Activated CD4-positive, alpha-beta memory T cell treated with anti-CD3 and anti-CD28 coated beads for 36 hours (primary cell): ENCODE measurements at regions of chr1 and their contacts with region 1.

Region 1: DNA sequence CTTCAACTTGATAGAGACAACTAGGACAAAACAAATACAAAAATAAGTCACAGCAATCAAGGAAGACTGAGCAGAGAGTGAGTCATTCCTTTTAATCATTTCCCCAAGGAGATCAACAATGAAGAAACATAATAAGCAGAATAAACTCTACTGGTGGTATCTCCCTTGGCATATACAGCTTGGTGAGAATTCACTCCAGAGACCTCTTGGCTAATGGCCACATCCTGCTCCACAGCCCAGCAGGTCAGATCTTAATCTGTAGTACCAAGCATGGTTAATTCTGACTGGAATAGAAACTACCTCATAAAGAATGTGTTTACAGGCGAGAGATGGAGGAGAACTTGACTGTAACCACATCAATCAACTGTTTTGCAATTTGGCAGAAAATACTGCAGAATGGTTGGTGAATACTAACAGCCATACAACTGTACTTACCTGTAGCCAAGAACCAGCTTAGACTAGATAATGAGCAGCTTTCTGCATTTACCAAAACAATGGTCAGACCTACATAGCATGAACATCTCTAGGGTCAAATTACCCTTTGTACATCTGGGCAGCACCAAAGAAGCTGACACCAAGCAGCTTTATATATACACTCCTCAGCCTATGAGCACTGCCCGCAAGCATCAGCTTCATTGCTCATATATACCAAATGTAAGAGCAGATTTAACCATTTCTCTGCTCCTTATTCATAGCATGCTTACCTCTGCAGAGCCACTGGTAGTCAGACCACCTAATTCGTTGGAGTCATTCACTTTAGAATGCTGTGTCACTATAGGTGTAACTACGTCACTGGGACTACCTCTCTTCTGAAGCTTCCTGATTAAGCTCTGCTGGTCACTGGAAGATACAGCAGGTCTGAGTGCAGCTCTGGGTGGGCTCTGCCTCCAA is 51.0 kb downstream of the KIAA0319L start:
- DNase-seq: peak; percentile 77
- H3K4me3 Mint-ChIP-seq: peak overlapping the region; percentile 28
- H3K27ac Mint-ChIP-seq: peak overlapping the region; percentile 81
- H3K4me1 Mint-ChIP-seq: peaks cover 62% of the 10 kb centered on the region
- H3K27me3 Mint-ChIP-seq: no peaks in the 10 kb centered on the region

Region 2: DNA sequence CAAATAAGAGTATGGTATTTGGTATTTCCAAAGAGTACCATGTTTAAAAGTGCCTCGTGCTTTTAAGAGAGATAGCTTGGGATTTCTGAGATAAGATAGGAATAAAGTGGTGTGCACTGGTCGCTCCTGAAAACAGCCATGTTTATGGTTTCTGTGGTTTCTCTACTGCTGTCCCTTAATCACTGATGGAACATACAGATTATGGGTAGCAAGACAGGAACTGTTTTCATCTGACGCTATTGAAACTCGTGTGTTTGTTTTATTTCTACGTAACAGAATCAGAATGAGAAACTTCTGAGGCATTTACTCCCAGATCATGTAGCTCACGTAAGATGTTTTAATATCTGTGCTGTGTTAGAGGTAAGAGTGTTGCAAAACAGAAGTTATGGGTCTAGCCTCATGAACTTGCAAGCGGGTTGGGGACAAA is 75.0 kb before region 1 on chr1:
- CTCF ChIA-PET with region 1: no interaction called
- POLR2A ChIA-PET with region 1: interaction called, 3 read pairs
- intact Hi-C with region 1: loop called (anchors 1 kb)
- DNase-seq: no peak
- H3K4me3 Mint-ChIP-seq: no peak overlapping the region
- H3K27ac Mint-ChIP-seq: peak overlapping the region; percentile 81
- H3K4me1 Mint-ChIP-seq: peaks cover 29% of the 10 kb centered on the region
- H3K27me3 Mint-ChIP-seq: no peaks in the 10 kb centered on the region

Region 3: DNA sequence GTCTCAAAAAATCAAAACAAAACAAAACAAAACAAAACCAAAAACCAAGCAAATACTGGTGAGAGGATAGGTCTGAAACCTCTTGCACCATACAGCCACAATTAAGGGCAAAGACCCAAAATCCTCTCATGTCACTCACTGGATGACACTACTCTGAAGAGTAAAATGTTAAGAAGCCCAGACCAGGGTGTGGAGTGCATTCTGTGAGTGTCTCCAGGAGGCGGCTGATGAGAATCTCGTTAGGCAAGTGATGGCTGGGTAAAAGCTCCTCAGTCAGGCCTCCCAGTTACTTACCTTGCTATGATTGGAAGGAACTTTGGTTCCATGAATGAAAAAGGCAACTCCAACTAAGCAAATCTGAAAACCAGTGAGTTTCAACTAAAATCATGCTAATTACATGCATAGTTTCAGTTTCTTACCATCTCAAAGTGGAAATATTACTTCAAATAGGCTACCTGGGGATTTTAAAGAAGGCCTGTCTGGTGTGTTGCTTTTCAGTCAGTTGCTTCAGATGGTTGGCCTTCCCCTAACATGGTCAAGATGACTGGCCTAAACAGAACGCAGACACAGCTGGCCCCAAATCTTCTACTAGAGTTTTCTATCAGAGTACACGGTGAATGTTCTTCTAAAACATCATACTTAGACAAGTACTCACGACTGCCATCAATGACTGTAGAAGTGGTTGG is 44.0 kb before region 1 on chr1:
- CTCF ChIA-PET with region 1: no interaction called
- POLR2A ChIA-PET with region 1: interaction called, 3 read pairs
- intact Hi-C with region 1: loop called (anchors 1 kb)
- DNase-seq: peak; percentile 53
- H3K4me3 Mint-ChIP-seq: peak overlapping the region; percentile 13
- H3K27ac Mint-ChIP-seq: peak overlapping the region; percentile 85
- H3K4me1 Mint-ChIP-seq: peaks cover 25% of the 10 kb centered on the region
- H3K27me3 Mint-ChIP-seq: no peaks in the 10 kb centered on the region

Region 4: GRCh38 chr1:35488336-35488735 is 17.8 kb before region 1 on chr1:
- CTCF ChIA-PET with region 1: no interaction called
- POLR2A ChIA-PET with region 1: no interaction called
- intact Hi-C with region 1: no loop called
- DNase-seq: no peak
- H3K4me3 Mint-ChIP-seq: no peak overlapping the region
- H3K27ac Mint-ChIP-seq: no peak overlapping the region
- H3K4me1 Mint-ChIP-seq: peaks cover 12% of the 10 kb centered on the region
- H3K27me3 Mint-ChIP-seq: no peaks in the 10 kb centered on the region

Region 5: DNA sequence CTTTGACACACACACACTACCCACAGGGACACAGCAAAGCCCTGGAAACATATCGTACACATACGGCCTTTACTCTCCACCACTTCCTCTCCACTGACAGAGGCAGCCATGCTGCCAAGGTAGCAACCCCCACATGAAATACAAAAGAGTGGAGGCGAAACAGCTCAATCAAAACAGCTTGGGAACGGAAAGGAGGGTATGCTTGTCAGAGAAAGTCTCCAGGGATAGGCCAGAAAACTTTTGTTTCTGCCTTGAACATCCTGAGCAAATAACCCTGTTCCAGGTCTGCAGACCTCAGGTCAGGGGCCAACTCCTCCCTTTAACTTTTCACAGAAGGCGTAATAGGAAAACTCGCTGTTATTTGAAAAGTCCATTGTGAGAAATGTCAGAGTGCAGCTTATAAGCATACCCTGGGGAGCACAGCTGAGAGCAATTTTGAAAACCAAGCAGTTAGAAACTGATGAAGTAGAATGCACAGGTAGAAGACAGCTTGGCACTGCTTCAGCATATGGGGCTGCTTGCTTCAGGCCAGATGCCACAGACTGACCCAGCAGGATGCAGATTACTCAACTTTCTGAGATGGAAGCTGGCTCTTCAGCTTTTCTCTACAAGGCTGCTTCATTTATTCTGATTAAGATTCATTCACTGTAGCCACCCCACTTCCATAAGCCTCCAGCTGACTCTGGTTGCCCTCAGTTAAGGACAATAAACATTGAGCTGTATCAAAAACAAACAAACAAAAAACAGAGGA is 33.1 kb after region 1 on chr1:
- CTCF ChIA-PET with region 1: interaction called, 9 read pairs
- POLR2A ChIA-PET with region 1: interaction called, 6 read pairs
- intact Hi-C with region 1: loop called (anchors 1 kb)
- DNase-seq: peak; percentile 56
- H3K4me3 Mint-ChIP-seq: peak overlapping the region; percentile 55
- H3K27ac Mint-ChIP-seq: peak overlapping the region; percentile 87
- H3K4me1 Mint-ChIP-seq: peaks cover 73% of the 10 kb centered on the region
- H3K27me3 Mint-ChIP-seq: no peaks in the 10 kb centered on the region

Region 6: GRCh38 chr1:36366091-36366661 is 860.0 kb after region 1 on chr1:
- CTCF ChIA-PET with region 1: no interaction called
- POLR2A ChIA-PET with region 1: no interaction called
- intact Hi-C with region 1: no loop called
- DNase-seq: peak; percentile 74
- H3K4me3 Mint-ChIP-seq: peak overlapping the region; percentile 39
- H3K27ac Mint-ChIP-seq: peak overlapping the region; percentile 95
- H3K4me1 Mint-ChIP-seq: peaks cover 51% of the 10 kb centered on the region
- H3K27me3 Mint-ChIP-seq: no peaks in the 10 kb centered on the region